ENCODE measurements at regions of chr2 and their contacts with region 1.

Region 1: GRCh38 chr2:37767956-37768925 is 96.8 kb upstream of the CDC42EP3 start:
- DNase-seq: no peak
- ATAC-seq: peak; percentile 75; the same call in 1 of the 2 replicates
- H3K4me3 ChIP-seq: no peak overlapping the region
- H3K27ac ChIP-seq: no peak overlapping the region
- H3K4me1 ChIP-seq: no peaks in the 10 kb centered on the region
- H3K27me3 ChIP-seq: no peaks in the 10 kb centered on the region; the same call in 1 of the 2 replicates
- CTCF ChIP-seq: no peak

Region 2: GRCh38 chr2:37730037-37730818 is 38.0 kb before region 1 on chr2:
- CTCF ChIA-PET with region 1: no interaction called
- POLR2A ChIA-PET with region 1: no interaction called
- in situ Hi-C with region 1: no loop called
- intact Hi-C with region 1: no loop called
- DNase-seq: no peak
- ATAC-seq: no peak
- H3K4me3 ChIP-seq: no peak overlapping the region
- H3K27ac ChIP-seq: no peak overlapping the region
- H3K4me1 ChIP-seq: no peaks in the 10 kb centered on the region
- H3K27me3 ChIP-seq: no peaks in the 10 kb centered on the region
- CTCF ChIP-seq: no peak

Region 3: GRCh38 chr2:37809931-37810570 is 41.8 kb after region 1 on chr2:
- CTCF ChIA-PET with region 1: no interaction called
- POLR2A ChIA-PET with region 1: interaction called, 10 read pairs
- in situ Hi-C with region 1: no loop called
- intact Hi-C with region 1: no loop called
- DNase-seq: no peak
- ATAC-seq: no peak
- H3K4me3 ChIP-seq: no peak overlapping the region
- H3K27ac ChIP-seq: no peak overlapping the region
- H3K4me1 ChIP-seq: no peaks in the 10 kb centered on the region
- H3K27me3 ChIP-seq: no peaks in the 10 kb centered on the region
- CTCF ChIP-seq: no peak

Measured in Panc1 (cell line).